ENCODE measurements at regions of chr5 and their contacts with region 1.

Region 1: GRCh38 chr5:181005791-181006190 is 17.1 kb downstream of the BTNL3 start:
- DNase-seq: no peak
- H3K4me3 ChIP-seq: no peak overlapping the region
- H3K27ac ChIP-seq: no peak overlapping the region
- H3K4me1 ChIP-seq: no peaks in the 10 kb centered on the region
- H3K27me3 ChIP-seq: no peaks in the 10 kb centered on the region
- CTCF ChIP-seq: no peak
- POLR2A ChIP-seq: no peak

Region 2: GRCh38 chr5:180784497-180785097 is 221.2 kb before region 1 on chr5:
- intact Hi-C with region 1: no loop called
- DNase-seq: peak; percentile 87 to 92
- H3K4me3 ChIP-seq: no peak overlapping the region
- H3K27ac ChIP-seq: peak overlapping the region; percentile 75 to 83 (median 79)
- H3K4me1 ChIP-seq: peaks cover 17 to 33% of the 10 kb centered on the region in 2 donors
- H3K27me3 ChIP-seq: no peaks in the 10 kb centered on the region
- CTCF ChIP-seq: peak; percentile 32 to 84 (median 80)
- POLR2A ChIP-seq: no peak

Region 3: GRCh38 chr5:180950291-180950949 is 55.4 kb before region 1 on chr5:
- intact Hi-C with region 1: loop called (anchors 5 kb)
- DNase-seq: no peak
- H3K4me3 ChIP-seq: no peak overlapping the region
- H3K27ac ChIP-seq: no peak overlapping the region
- H3K4me1 ChIP-seq: no peaks in the 10 kb centered on the region
- H3K27me3 ChIP-seq: no peaks in the 10 kb centered on the region
- CTCF ChIP-seq: no peak
- POLR2A ChIP-seq: no peak

Region 4: GRCh38 chr5:181133610-181134231 is 127.9 kb after region 1 on chr5:
- intact Hi-C with region 1: no loop called
- DNase-seq: peak; percentile 65 to 68
- H3K4me3 ChIP-seq: no peak overlapping the region
- H3K27ac ChIP-seq: no peak overlapping the region
- H3K4me1 ChIP-seq: peaks cover 0 to 3% of the 10 kb centered on the region in 2 donors
- H3K27me3 ChIP-seq: no peaks in the 10 kb centered on the region
- CTCF ChIP-seq: no peak
- POLR2A ChIP-seq: no peak

Measured in thyroid gland (tissue), 4 donors.